Endothelial cell of umbilical vein (primary cell): ENCODE measurements at regions of chr9 and their contacts with region 1.

Region 1: GRCh38 chr9:128892317-128892921 is 10.5 kb downstream of the LRRC8A start:
- DNase-seq: peak; percentile 82
- H3K4me3 ChIP-seq: no peak overlapping the region
- H3K27ac ChIP-seq: peak overlapping the region; percentile 75
- H3K4me1 ChIP-seq: peaks cover 34% of the 10 kb centered on the region
- H3K27me3 ChIP-seq: no peaks in the 10 kb centered on the region
- CTCF ChIP-seq: no peak
- POLR2A ChIP-seq: no peak

Region 2: GRCh38 chr9:128911529-128912035 is 19.2 kb after region 1 on chr9:
- CTCF ChIA-PET with region 1: interaction called, 7 read pairs
- POLR2A ChIA-PET with region 1: interaction called, 8 read pairs
- dilution Hi-C with region 1: no loop called
- intact Hi-C with region 1: loop called (anchors 1 kb)
- DNase-seq: peak; percentile 85
- H3K4me3 ChIP-seq: no peak overlapping the region
- H3K27ac ChIP-seq: peak overlapping the region; percentile 94
- H3K4me1 ChIP-seq: peaks cover 58% of the 10 kb centered on the region
- H3K27me3 ChIP-seq: no peaks in the 10 kb centered on the region
- CTCF ChIP-seq: no peak
- POLR2A ChIP-seq: no peak

Region 3: DNA sequence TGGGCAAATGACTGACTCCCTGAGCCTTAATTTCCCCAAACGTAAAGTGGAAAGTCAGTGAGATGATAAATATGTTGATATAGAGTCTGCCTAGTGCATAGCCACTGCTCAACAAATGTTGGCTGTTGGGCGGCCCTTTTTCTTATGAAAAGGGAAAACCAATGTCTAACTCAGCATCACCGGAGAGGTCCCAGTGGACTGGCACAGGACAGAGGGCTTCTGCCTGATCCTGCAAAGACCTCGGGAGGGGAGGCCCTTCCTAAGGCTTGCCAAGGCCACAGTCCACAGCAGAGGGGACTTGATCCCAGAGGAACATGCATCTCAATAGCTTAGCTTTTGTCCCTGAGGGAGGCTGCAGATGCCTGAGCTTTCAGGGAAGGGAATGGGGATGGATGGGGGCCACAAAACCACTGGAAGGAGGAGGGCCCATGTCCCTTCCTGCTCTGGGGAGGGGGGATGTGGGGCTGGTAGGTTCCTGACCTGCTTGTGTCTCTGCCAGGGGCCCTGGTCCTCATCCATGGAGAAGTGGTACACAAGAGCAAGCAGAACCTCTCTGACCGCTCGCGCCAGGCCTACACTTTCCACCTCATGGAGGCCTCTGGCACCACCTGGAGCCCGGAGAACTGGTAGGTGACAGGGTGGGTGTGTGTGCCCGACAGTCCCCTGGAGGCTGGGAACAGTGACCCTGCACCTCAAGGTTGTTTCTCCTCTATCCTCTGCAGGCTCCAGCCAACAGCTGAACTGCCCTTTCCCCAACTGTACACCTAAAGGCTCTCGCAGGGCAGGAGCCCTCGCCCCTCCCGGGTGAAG is 48.7 kb after region 1 on chr9:
- CTCF ChIA-PET with region 1: no interaction called
- POLR2A ChIA-PET with region 1: no interaction called
- dilution Hi-C with region 1: no loop called
- intact Hi-C with region 1: no loop called
- DNase-seq: no peak
- H3K4me3 ChIP-seq: no peak overlapping the region
- H3K27ac ChIP-seq: no peak overlapping the region
- H3K4me1 ChIP-seq: peaks cover 19% of the 10 kb centered on the region
- H3K27me3 ChIP-seq: no peaks in the 10 kb centered on the region
- CTCF ChIP-seq: no peak
- POLR2A ChIP-seq: no peak